ENCODE measurements at regions of chr1 and their contacts with region 1.

Region 1: DNA sequence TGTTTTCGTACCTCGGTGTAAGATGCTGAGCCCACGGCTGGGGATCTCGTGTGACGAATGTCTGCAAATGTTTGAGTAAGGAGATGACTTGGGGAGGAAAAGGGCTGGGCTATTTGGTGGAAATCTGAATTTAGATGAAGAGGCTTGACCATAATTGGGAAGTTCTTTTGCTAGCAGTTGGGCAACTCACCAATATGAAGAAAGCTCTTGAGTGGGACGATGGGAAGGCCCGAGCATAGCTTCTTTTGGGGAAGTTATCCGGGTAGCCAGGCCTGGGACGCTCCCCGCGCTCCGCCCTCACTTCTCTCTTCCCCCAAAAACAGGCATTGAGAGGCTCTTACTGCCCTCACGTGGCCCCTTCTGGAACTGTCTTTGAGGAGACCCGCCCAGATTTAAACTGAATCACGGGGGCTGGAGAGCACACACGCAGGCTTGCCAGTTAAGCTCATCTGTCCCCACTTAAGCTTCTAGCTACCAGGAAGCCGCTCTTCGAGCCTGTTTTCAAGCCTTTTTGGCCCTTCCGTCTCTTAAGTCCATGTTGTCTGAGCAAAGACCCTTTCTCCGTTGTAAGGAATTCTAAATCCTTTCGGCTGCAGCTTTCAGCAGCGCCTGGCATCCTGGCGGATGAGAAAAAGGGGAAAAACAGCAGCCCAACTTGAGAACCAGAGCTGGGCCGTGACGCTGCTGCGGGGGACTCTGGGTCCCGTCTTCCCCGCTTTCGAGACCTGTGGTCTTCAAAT is 93.1 kb downstream of the NID1 start:
- DNase-seq: peak; percentile 98
- H3K4me3 Mint-ChIP-seq: no peak overlapping the region
- H3K27ac Mint-ChIP-seq: peak overlapping the region; percentile 9
- H3K4me1 Mint-ChIP-seq: peaks cover 17% of the 10 kb centered on the region
- H3K27me3 Mint-ChIP-seq: no peaks in the 10 kb centered on the region
- CTCF ChIP-seq: peak; percentile 99

Region 2: DNA sequence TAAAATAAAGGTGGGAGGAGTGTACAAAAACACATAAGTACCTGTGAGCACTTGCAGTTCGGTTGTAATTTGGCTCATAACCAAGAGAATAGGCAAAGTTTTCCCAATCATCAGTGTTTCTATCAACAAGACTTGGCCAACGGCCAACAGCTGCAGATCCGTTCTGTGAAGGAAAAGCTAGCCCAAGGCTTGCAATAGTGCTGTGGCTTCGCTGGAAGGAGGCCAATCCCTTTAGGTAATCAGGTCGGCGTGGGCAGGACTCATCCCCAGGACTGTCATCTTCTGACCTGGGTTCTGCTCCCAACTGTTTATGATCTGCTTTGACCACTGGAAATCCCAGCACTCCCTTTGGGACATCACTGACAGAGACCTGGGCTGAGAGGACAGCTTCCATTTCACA is 212.8 kb before region 1 on chr1:
- CTCF ChIA-PET with region 1: interaction called, 14 read pairs
- POLR2A ChIA-PET with region 1: no interaction called
- intact Hi-C with region 1: no loop called
- DNase-seq: peak; percentile 100
- H3K4me3 Mint-ChIP-seq: no peak overlapping the region
- H3K27ac Mint-ChIP-seq: no peak overlapping the region
- H3K4me1 Mint-ChIP-seq: peaks cover 12% of the 10 kb centered on the region
- H3K27me3 Mint-ChIP-seq: no peaks in the 10 kb centered on the region
- CTCF ChIP-seq: no peak

Region 3: GRCh38 chr1:235831148-235831547 is 140.6 kb before region 1 on chr1:
- CTCF ChIA-PET with region 1: interaction called, 17 read pairs
- POLR2A ChIA-PET with region 1: interaction called, 4 read pairs
- intact Hi-C with region 1: no loop called
- DNase-seq: peak; percentile 40
- H3K4me3 Mint-ChIP-seq: no peak overlapping the region
- H3K27ac Mint-ChIP-seq: no peak overlapping the region
- H3K4me1 Mint-ChIP-seq: peaks cover 6% of the 10 kb centered on the region
- H3K27me3 Mint-ChIP-seq: no peaks in the 10 kb centered on the region
- CTCF ChIP-seq: no peak

Region 4: DNA sequence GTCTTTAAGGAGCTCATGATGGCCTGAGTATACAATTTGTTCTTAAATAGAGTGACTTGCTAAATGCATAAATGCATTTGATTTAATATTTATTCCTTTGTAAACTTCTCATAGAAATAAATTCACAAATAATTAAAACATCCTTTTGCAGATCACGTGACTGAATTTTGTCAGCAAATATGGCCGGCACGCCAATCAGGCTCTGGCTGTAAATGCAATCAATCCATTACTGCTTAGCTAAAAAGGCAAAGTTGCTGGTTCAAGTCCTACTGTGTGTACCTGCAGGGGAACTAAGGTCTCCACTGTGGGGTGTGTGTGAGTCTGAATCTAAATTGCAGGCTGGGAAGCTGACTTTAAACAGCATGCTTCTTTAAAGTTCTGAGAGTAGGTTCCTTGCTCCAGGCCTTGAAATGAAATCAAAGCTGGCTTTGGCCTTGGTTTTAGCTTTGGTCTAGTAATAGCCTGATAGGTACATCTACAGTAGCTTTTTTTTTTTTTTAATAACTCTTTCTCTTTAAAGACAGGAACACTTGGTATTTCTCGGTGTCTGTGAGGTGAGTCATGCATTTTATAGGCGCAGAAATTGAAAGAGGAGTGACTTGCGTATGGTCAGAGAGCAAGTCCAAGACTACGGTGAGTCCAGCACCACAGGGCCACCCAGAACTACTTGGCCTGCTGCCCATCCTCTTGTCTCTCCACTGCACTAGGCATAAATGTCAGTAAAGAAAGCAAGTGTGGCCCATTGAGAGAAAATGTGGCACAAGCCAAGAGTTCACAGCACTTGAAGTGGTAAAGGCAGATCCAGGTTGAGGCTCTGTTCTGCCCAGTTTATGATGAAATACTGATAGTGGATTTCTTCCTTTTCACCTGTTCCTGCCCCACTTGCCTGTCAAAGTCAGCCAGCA is 68.9 kb before region 1 on chr1:
- CTCF ChIA-PET with region 1: interaction called, 20 read pairs
- POLR2A ChIA-PET with region 1: interaction called, 8 read pairs
- intact Hi-C with region 1: no loop called
- DNase-seq: peak; percentile 99
- H3K4me3 Mint-ChIP-seq: peak overlapping the region; percentile 15
- H3K27ac Mint-ChIP-seq: peak overlapping the region; percentile 61
- H3K4me1 Mint-ChIP-seq: peaks cover 44% of the 10 kb centered on the region
- H3K27me3 Mint-ChIP-seq: no peaks in the 10 kb centered on the region
- CTCF ChIP-seq: no peak

Region 5: DNA sequence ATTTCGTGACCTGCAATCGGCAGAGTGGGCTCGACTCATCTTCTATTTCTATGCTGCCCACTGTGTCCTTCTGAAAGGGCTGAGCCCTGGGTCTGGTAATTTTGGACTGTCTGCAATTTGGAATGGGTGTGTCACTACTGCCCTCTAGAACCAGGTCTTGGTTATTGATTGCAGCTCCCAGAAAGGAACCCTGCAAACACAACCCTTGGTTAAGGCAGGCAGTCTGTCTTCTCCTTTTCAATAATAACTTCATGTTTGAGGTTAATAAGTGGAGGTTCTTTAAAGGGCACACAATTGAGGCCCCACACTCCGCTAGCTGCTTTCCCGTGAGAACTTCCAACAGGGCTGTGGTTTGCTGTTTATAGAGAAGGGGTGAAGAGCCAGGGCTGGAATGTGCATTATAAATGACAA is 25.2 kb before region 1 on chr1:
- CTCF ChIA-PET with region 1: interaction called, 35 read pairs
- POLR2A ChIA-PET with region 1: interaction called, 4 read pairs
- intact Hi-C with region 1: no loop called
- DNase-seq: peak; percentile 77
- H3K4me3 Mint-ChIP-seq: no peak overlapping the region
- H3K27ac Mint-ChIP-seq: no peak overlapping the region
- H3K4me1 Mint-ChIP-seq: peaks cover 47% of the 10 kb centered on the region
- H3K27me3 Mint-ChIP-seq: no peaks in the 10 kb centered on the region
- CTCF ChIP-seq: peak; percentile 75

Region 6: GRCh38 chr1:235999259-235999925 is 27.7 kb after region 1 on chr1:
- CTCF ChIA-PET with region 1: interaction called, 24 read pairs
- POLR2A ChIA-PET with region 1: interaction called, 4 read pairs
- intact Hi-C with region 1: no loop called
- DNase-seq: peak; percentile 94
- H3K4me3 Mint-ChIP-seq: peak overlapping the region; percentile 0
- H3K27ac Mint-ChIP-seq: peak overlapping the region; percentile 71
- H3K4me1 Mint-ChIP-seq: peaks cover 45% of the 10 kb centered on the region
- H3K27me3 Mint-ChIP-seq: no peaks in the 10 kb centered on the region
- CTCF ChIP-seq: no peak

Region 7: DNA sequence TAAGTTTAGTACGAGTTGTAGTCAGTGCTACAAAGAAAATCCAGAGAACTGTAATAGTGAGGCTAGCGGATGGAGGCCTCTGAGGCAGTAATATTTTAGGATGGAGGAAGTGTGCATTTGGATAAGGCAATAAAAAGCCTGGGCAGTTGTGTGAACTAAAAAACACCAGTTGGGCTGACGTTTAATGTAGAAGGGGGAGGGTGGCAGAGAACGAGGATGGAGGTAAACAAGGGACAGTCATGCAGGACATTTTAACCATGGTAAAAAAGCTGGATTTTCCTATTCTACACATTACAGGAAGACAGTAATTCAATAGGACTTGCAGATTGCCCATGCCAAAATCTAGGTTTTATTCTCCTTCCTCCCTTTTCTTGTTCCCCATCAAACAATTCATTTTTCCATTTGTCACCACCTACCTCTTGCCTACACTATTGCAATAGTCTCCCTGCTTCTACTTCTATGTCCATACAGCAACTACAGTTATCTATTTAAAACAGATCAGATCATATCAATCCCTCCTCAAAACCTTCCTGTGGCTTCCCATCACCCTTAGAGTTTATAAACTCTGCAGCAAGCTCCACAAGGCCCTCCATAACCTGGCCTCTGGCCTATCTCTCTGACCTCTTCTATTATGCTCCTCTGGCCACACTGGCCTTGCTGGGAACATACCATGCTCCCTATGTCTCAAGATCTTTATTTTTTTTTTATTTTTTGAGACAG is 282.3 kb after region 1 on chr1:
- CTCF ChIA-PET with region 1: no interaction called
- POLR2A ChIA-PET with region 1: no interaction called
- intact Hi-C with region 1: no loop called
- DNase-seq: no peak
- H3K4me3 Mint-ChIP-seq: no peak overlapping the region
- H3K27ac Mint-ChIP-seq: no peak overlapping the region
- H3K4me1 Mint-ChIP-seq: no peaks in the 10 kb centered on the region
- H3K27me3 Mint-ChIP-seq: no peaks in the 10 kb centered on the region
- CTCF ChIP-seq: no peak

Region 8: GRCh38 chr1:236433819-236434315 is 462.1 kb after region 1 on chr1:
- CTCF ChIA-PET with region 1: no interaction called
- POLR2A ChIA-PET with region 1: no interaction called
- intact Hi-C with region 1: no loop called
- DNase-seq: no peak
- H3K4me3 Mint-ChIP-seq: no peak overlapping the region
- H3K27ac Mint-ChIP-seq: no peak overlapping the region
- H3K4me1 Mint-ChIP-seq: no peaks in the 10 kb centered on the region
- H3K27me3 Mint-ChIP-seq: no peaks in the 10 kb centered on the region
- CTCF ChIP-seq: no peak